ENCODE measurements at regions of chr16 and their contacts with region 1.

Region 1: GRCh38 chr16:69754469-69755310 is at the start of gene NOB1:
- DNase-seq: peak; percentile 94
- H3K4me3 Mint-ChIP-seq: peak within 1 kb of the TSS; percentile 98
- H3K27ac Mint-ChIP-seq: peak within 1 kb of the TSS; percentile 99
- H3K4me1 Mint-ChIP-seq: peaks cover 3% of the 10 kb centered on the region
- H3K27me3 Mint-ChIP-seq: no peaks in the 10 kb centered on the region
- CTCF ChIP-seq: peak; percentile 93
- total RNA-seq, gene NOB1: 73.3 and 110 TPM in 2 replicates

Region 2: DNA sequence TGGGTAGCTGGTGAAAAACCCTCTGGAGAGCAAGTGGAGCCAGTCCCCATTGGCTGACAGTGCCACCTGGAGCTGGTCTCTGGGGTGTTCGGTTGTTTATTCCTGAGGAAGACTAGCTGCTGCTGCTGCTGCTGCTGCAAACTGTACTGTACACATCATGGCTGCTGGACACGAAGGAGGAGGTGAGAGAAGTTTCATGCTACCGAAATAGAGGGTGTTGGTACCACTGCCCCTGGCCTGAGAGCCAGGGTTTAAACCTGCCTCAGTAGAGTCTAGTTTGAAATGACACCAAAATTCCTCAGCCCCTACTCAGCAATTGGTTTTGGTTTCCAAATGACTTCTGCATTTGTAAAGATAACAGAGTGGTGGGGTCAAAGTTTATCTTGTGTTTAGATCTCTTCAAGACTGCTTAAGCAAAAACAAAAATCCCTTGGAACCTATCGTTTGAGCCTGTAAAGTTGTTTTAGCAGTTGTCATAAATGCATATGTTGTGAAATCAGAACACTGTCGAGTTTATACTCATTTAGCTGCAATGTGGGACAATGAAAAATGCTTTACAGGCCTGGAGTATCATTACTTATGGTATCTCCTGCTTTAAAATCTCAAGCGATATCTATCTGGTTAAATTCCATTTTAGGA is 289.5 kb before region 1 on chr16:
- CTCF ChIA-PET with region 1: no interaction called
- POLR2A ChIA-PET with region 1: no interaction called
- intact Hi-C with region 1: no loop called
- DNase-seq: no peak
- H3K4me3 Mint-ChIP-seq: no peak overlapping the region
- H3K27ac Mint-ChIP-seq: no peak overlapping the region
- H3K4me1 Mint-ChIP-seq: no peaks in the 10 kb centered on the region
- H3K27me3 Mint-ChIP-seq: no peaks in the 10 kb centered on the region
- CTCF ChIP-seq: no peak

Region 3: DNA sequence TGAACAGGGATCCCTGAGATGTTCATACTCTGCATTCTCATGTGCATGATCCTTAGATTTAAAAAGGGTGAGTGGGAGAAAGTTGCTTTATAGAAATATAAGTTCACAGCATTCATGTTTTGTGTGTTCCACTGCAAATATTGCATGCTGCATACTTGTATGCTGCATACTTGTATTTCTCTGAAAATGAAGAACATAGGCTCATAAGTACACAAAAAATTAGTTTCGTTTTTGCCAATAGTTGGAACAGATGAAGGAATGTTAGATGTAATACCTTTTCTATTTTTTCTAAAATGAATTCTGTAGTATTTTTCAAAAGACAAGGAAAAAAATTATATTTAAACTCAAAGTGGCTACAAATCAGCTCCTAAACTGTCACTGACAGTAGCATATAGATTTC is 109.9 kb before region 1 on chr16:
- CTCF ChIA-PET with region 1: no interaction called
- POLR2A ChIA-PET with region 1: no interaction called
- intact Hi-C with region 1: no loop called
- DNase-seq: no peak
- H3K4me3 Mint-ChIP-seq: no peak overlapping the region
- H3K27ac Mint-ChIP-seq: no peak overlapping the region
- H3K4me1 Mint-ChIP-seq: peaks cover 6% of the 10 kb centered on the region
- H3K27me3 Mint-ChIP-seq: no peaks in the 10 kb centered on the region
- CTCF ChIP-seq: no peak

Region 4: DNA sequence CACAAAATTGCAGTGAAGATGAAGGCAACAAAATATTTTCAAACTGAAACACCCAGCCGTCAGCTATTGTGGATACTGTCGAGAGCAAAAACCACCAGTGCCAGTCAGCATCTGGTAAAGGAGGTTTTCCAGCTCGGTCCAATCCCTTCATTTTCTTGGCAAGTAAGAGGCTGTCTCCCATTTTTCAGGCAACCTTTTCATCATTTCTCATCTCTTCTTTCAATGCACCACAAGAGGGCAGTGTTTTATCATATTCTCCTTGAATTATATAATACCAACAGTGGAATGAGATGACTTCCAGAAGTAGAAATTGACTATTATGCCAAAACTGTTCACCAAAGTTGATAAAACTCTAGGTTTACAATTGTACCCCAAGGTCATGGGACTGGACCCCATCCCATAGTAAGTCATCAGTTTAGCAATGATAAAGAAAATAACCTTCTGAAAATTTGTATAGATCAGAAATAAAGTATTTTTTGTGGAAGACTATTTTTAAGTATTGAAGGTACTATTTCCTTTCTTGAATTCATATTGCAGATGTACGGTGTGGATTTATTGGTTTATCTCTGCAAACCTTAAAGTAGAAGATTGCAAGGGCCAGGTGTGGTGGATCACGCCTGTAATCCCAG is 45.1 kb before region 1 on chr16:
- CTCF ChIA-PET with region 1: interaction called, 98 read pairs
- POLR2A ChIA-PET with region 1: interaction called, 67 read pairs
- intact Hi-C with region 1: loop called (anchors 1 kb)
- DNase-seq: peak; percentile 81
- H3K4me3 Mint-ChIP-seq: no peak overlapping the region
- H3K27ac Mint-ChIP-seq: no peak overlapping the region
- H3K4me1 Mint-ChIP-seq: peaks cover 16% of the 10 kb centered on the region
- H3K27me3 Mint-ChIP-seq: no peaks in the 10 kb centered on the region
- CTCF ChIP-seq: peak; percentile 65

Region 5: GRCh38 chr16:69732101-69732500 is 22.6 kb before region 1 on chr16:
- CTCF ChIA-PET with region 1: interaction called, 87 read pairs
- POLR2A ChIA-PET with region 1: interaction called, 138 read pairs
- intact Hi-C with region 1: no loop called
- DNase-seq: no peak
- H3K4me3 Mint-ChIP-seq: no peak overlapping the region
- H3K27ac Mint-ChIP-seq: no peak overlapping the region
- H3K4me1 Mint-ChIP-seq: peaks cover 3% of the 10 kb centered on the region
- H3K27me3 Mint-ChIP-seq: no peaks in the 10 kb centered on the region
- CTCF ChIP-seq: no peak

Region 6: GRCh38 chr16:69741919-69742904 is 12.5 kb before region 1 on chr16:
- CTCF ChIA-PET with region 1: interaction called, 13 read pairs
- POLR2A ChIA-PET with region 1: interaction called, 20 read pairs
- intact Hi-C with region 1: no loop called
- DNase-seq: peak; percentile 91
- H3K4me3 Mint-ChIP-seq: no peak overlapping the region
- H3K27ac Mint-ChIP-seq: no peak overlapping the region
- H3K4me1 Mint-ChIP-seq: peaks cover 11% of the 10 kb centered on the region
- H3K27me3 Mint-ChIP-seq: no peaks in the 10 kb centered on the region
- CTCF ChIP-seq: no peak

Region 7: GRCh38 chr16:69833357-69834282 is 78.9 kb after region 1 on chr16:
- CTCF ChIA-PET with region 1: no interaction called
- POLR2A ChIA-PET with region 1: no interaction called
- intact Hi-C with region 1: no loop called
- DNase-seq: no peak
- H3K4me3 Mint-ChIP-seq: no peak overlapping the region
- H3K27ac Mint-ChIP-seq: no peak overlapping the region
- H3K4me1 Mint-ChIP-seq: no peaks in the 10 kb centered on the region
- H3K27me3 Mint-ChIP-seq: no peaks in the 10 kb centered on the region
- CTCF ChIP-seq: no peak

Region 8: DNA sequence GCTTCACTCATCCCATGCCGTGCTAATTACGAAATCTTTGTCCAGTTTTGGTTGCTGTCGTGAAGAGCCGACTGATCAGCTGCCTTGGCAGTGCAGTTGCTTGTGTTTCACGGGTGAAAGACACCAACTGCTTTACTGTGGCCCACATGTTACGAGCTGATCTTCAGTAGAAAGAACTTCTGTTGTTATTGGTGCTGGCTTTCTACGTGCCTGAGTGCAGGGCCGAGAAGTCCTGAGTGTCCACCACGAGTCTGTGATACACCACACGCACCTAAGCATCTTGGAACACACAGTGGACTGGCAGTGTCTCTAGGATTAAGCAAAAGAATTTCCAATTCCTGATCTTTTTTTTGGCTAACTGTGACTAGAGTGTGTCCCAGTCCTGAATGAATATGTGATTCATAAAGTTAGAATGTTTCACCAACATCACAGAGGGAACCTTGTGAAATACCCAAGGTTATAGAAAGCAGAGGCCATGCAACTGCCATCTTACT is 126.0 kb after region 1 on chr16:
- CTCF ChIA-PET with region 1: no interaction called
- POLR2A ChIA-PET with region 1: no interaction called
- intact Hi-C with region 1: no loop called
- DNase-seq: peak; percentile 4
- H3K4me3 Mint-ChIP-seq: no peak overlapping the region
- H3K27ac Mint-ChIP-seq: no peak overlapping the region
- H3K4me1 Mint-ChIP-seq: peaks cover 2% of the 10 kb centered on the region
- H3K27me3 Mint-ChIP-seq: no peaks in the 10 kb centered on the region
- CTCF ChIP-seq: no peak